HepG2 (cell line): ENCODE measurements at regions of chr5 and their contacts with region 1.

Region 1: DNA sequence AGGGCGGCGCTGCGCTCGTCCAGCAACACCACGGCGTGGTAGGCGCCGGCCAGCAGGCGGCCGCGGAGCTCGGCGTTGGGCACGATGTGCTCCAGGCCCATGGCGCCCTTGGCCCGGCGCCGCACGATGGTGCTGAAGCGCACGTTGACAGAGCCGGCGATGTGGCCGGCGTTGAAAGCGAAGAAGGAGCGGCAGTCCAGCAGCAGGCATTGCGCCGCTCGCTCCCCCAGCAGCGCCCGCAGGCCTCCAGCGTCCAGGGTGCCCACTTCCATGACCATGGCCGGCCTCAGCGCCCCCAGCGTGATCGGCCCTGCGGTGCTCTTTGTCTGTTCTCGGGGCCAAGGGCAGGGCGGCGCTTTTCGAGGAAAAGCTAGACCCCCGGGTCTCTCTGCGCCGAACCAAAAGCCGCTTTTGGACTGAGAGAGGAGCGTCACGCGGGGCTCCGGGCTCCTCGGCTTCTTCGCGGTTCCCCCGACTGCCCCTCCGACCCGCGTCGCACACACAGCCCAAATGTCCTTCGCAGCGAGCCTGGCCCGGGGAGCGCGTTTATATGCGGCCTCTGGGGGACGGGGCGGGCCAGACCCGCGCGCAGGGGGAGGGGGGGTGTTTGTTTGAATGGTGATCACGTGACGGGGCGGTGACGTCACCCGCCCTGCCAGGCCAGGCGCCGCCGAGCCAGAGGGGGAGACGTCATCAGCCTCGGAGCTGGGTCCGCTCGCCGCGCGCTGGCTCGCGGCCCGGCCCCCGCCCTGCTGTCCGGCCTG is at the start of gene DUSP1:
- DNase-seq: peak; percentile 88
- ATAC-seq: peak; percentile 64
- H3K4me3 ChIP-seq: peak within 1 kb of the TSS; percentile 90 to 94 (median 92)
- H3K27ac ChIP-seq: peak within 1 kb of the TSS; percentile 98
- H3K4me1 ChIP-seq: peaks cover 80% of the 10 kb centered on the region
- H3K27me3 ChIP-seq: no peaks in the 10 kb centered on the region; a peak in 1 of 5 replicates
- CTCF ChIP-seq: peak; percentile 64
- EP300 ChIP-seq: no peak
- POLR2A ChIP-seq: peak in 1 of 2 experiments; percentile 98; a peak in 2 of 4 replicates
- RAD21 ChIP-seq: peak; percentile 97
- total RNA-seq, gene DUSP1: 18.0 and 27.1 TPM in 2 replicates

Region 2: DNA sequence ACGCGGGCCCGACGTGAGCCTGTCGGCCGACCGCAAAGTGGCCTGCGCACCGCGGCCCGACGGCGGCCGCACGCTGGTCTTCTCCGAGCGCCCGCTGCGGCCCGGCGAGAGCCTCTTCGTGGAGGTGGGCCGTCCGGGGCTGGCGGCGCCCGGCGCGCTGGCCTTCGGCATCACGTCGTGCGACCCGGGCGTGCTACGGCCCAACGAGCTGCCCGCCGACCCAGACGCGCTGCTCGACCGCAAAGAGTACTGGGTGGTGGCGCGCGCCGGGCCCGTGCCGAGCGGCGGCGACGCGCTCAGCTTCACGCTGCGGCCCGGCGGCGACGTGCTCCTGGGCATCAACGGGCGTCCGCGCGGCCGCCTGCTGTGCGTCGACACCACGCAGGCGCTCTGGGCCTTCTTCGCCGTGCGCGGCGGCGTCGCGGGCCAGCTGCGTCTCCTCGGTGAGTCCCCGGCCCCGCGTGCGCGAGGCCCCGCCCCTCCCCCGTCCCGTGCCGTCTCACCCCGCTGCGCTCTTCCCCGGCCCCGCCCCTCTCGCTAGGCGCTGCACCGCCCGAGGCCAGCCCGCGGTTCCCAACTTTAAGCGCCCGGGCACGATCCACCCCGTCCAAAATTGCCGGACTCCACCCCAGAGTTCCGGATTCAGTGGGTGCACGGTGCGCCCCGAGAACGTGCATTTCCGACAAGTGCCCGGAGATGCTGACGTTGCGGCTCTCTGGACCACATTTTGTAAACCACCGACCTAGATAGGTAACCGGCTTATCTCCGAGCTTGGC is 87.0 kb before region 1 on chr5:
- CTCF ChIA-PET with region 1: no interaction called
- POLR2A ChIA-PET with region 1: no interaction called
- in situ Hi-C with region 1: no loop called
- intact Hi-C with region 1: no loop called
- DNase-seq: no peak
- ATAC-seq: no peak
- H3K4me3 ChIP-seq: no peak overlapping the region
- H3K27ac ChIP-seq: no peak overlapping the region
- H3K4me1 ChIP-seq: peaks cover 19% of the 10 kb centered on the region
- H3K27me3 ChIP-seq: peaks cover 0 to 9% of the 10 kb centered on the region in 2 experiments; a peak in 1 of 5 replicates
- CTCF ChIP-seq: no peak
- EP300 ChIP-seq: no peak
- POLR2A ChIP-seq: no peak
- RAD21 ChIP-seq: no peak

Region 3: DNA sequence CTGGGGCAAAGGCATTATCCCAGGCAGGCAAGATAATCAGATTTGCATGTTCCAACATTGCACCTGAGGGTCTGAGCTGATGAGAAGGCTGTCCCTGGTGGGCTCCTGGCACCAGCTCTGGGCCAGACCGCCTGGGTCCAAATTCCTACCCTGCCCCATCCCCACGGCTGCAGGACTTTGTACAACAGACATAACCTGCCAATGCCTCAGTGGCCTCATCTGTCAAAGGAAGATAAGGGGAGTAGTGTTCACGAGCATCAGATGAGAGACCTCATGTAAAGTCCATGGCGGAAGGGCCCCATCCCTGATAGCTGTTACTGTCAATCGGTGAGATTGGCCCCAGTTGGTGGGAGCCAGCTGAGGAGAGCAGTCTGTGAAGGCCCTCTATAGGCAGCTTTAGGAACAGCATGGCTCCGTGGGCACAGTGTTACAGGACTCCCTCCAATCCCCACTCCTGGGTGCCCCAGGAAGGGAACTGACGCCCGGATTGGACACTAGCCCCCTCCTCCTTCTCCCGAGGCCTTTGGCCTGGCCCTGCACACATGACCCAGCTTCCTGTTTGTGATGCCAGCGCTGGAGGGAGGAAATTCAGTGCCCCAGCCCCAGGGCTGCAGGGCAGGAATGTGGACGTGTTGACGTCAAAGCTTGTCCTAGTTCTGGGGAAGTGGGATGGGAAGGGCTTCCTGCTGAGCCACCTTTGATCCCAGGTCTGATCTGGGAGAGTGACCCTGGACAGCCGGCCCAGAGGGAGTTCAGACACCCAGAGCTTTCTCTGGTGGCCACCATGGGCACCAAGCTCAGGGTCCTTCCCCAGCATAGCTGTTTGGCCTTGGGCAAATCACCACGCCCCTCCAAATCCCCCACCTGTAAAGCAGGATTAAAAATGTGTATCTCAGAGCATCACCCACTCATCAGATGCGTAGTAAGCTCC is 56.1 kb before region 1 on chr5:
- CTCF ChIA-PET with region 1: interaction called, 6 read pairs
- POLR2A ChIA-PET with region 1: interaction called, 71 read pairs
- in situ Hi-C with region 1: no loop called
- intact Hi-C with region 1: loop called (anchors 2 kb)
- DNase-seq: peak; percentile 91
- ATAC-seq: peak; percentile 83
- H3K4me3 ChIP-seq: peak overlapping the region in 2 of 3 experiments; percentile 15 to 49; a peak in 4 of 6 replicates
- H3K27ac ChIP-seq: peak overlapping the region; percentile 66
- H3K4me1 ChIP-seq: peaks cover 51% of the 10 kb centered on the region
- H3K27me3 ChIP-seq: no peaks in the 10 kb centered on the region
- CTCF ChIP-seq: peak; percentile 84
- EP300 ChIP-seq: peak in 1 of 2 experiments; percentile 69; a peak in 1 of 4 replicates
- POLR2A ChIP-seq: peak in 1 of 2 experiments; percentile 67; a peak in 2 of 4 replicates
- RAD21 ChIP-seq: peak; percentile 61

Region 4: GRCh38 chr5:172733131-172733973 is 37.5 kb before region 1 on chr5:
- CTCF ChIA-PET with region 1: no interaction called
- POLR2A ChIA-PET with region 1: interaction called, 29 read pairs
- in situ Hi-C with region 1: loop called (anchors 5 kb)
- intact Hi-C with region 1: no loop called
- DNase-seq: peak; percentile 51
- ATAC-seq: peak; percentile 71
- H3K4me3 ChIP-seq: peak overlapping the region; percentile 36 to 57 (median 37); a peak in 5 of 6 replicates
- H3K27ac ChIP-seq: peak overlapping the region; percentile 17
- H3K4me1 ChIP-seq: peaks cover 88% of the 10 kb centered on the region
- H3K27me3 ChIP-seq: peaks cover 0 to 15% of the 10 kb centered on the region in 2 experiments; a peak in 3 of 5 replicates
- CTCF ChIP-seq: no peak
- EP300 ChIP-seq: no peak
- POLR2A ChIP-seq: 0 out of 4 replicates have a peak, but pooled peaks of 1 of the 2 experiments have one; percentile 21
- RAD21 ChIP-seq: no peak

Region 5: GRCh38 chr5:172795318-172795977 is 24.6 kb after region 1 on chr5:
- CTCF ChIA-PET with region 1: no interaction called
- POLR2A ChIA-PET with region 1: interaction called, 425 read pairs
- in situ Hi-C with region 1: no loop called
- intact Hi-C with region 1: no loop called
- DNase-seq: no peak
- ATAC-seq: no peak
- H3K4me3 ChIP-seq: no peak overlapping the region
- H3K27ac ChIP-seq: no peak overlapping the region
- H3K4me1 ChIP-seq: peaks cover 97% of the 10 kb centered on the region
- H3K27me3 ChIP-seq: no peaks in the 10 kb centered on the region
- CTCF ChIP-seq: no peak
- EP300 ChIP-seq: no peak
- POLR2A ChIP-seq: no peak
- RAD21 ChIP-seq: no peak

Region 6: GRCh38 chr5:172816901-172817564 is 46.2 kb after region 1 on chr5:
- CTCF ChIA-PET with region 1: no interaction called
- POLR2A ChIA-PET with region 1: interaction called, 10 read pairs
- in situ Hi-C with region 1: no loop called
- intact Hi-C with region 1: no loop called
- DNase-seq: no peak
- ATAC-seq: peak; percentile 72
- H3K4me3 ChIP-seq: peak overlapping the region in 1 of 3 experiments; percentile 29; a peak in 2 of 6 replicates
- H3K27ac ChIP-seq: no peak overlapping the region
- H3K4me1 ChIP-seq: peaks cover 44% of the 10 kb centered on the region
- H3K27me3 ChIP-seq: no peaks in the 10 kb centered on the region
- CTCF ChIP-seq: peak; percentile 37
- EP300 ChIP-seq: no peak
- POLR2A ChIP-seq: no peak
- RAD21 ChIP-seq: no peak

Region 7: GRCh38 chr5:172849606-172850453 is 79.0 kb after region 1 on chr5:
- CTCF ChIA-PET with region 1: no interaction called
- POLR2A ChIA-PET with region 1: interaction called, 28 read pairs
- in situ Hi-C with region 1: loop called (anchors 10 kb)
- intact Hi-C with region 1: no loop called
- DNase-seq: no peak
- ATAC-seq: no peak
- H3K4me3 ChIP-seq: no peak overlapping the region
- H3K27ac ChIP-seq: no peak overlapping the region
- H3K4me1 ChIP-seq: peaks cover 92% of the 10 kb centered on the region
- H3K27me3 ChIP-seq: no peaks in the 10 kb centered on the region
- CTCF ChIP-seq: no peak
- EP300 ChIP-seq: no peak
- POLR2A ChIP-seq: no peak
- RAD21 ChIP-seq: no peak

Region 8: GRCh38 chr5:172902497-172903200 is 131.8 kb after region 1 on chr5:
- CTCF ChIA-PET with region 1: interaction called, 7 read pairs
- POLR2A ChIA-PET with region 1: interaction called, 31 read pairs
- in situ Hi-C with region 1: loop called (anchors 5 kb)
- intact Hi-C with region 1: loop called (anchors 1 kb)
- DNase-seq: peak; percentile 90
- ATAC-seq: peak; percentile 84
- H3K4me3 ChIP-seq: no peak overlapping the region; a peak in 1 of 6 replicates
- H3K27ac ChIP-seq: peak overlapping the region; percentile 70
- H3K4me1 ChIP-seq: peaks cover 44% of the 10 kb centered on the region
- H3K27me3 ChIP-seq: no peaks in the 10 kb centered on the region
- CTCF ChIP-seq: peak; percentile 97
- EP300 ChIP-seq: peak in 1 of 2 experiments; percentile 78; a peak in 2 of 4 replicates
- POLR2A ChIP-seq: no peak
- RAD21 ChIP-seq: peak; percentile 80

Region 9: DNA sequence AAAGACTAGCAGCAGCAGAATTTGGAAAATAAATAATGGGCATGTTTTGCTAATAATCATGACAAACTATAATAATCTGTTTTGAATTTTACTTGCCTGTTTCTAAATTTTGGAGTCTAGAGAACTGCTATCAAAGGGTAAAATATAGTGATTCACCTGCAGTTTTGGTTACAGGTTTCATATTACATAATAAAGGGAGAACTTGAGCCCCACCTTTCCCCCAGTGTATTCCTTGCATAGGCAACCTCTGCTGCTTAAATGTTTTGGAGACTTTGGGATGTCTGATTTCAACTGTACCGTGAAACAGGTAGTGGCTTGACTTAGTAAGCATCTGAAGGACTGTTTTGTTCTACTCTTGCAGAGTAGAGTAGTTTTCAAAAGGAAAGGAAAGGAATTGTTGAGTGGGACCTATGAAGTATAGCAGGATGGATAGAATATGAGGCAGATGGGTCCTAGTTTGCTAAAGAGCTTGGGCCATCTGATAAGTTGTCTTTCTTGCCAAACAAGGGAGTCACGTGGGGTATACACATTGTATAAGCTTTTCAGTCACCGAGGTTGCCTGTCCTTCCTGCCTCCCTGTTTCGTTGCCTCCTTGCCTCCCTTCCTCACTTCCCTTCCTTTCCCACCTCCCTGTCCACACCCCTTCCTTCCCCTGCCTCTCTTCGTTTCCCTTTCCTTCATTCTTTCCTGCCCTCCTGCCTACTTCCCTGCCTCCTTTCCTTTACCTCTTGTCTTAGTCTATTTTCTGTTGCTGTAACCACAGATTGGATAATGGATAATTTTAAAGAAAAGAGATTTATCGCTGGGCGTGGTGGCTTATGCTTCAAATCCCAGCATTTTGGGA is 304.5 kb after region 1 on chr5:
- CTCF ChIA-PET with region 1: no interaction called
- POLR2A ChIA-PET with region 1: no interaction called
- in situ Hi-C with region 1: no loop called
- intact Hi-C with region 1: no loop called
- DNase-seq: no peak
- ATAC-seq: no peak
- H3K4me3 ChIP-seq: no peak overlapping the region
- H3K27ac ChIP-seq: no peak overlapping the region
- H3K4me1 ChIP-seq: peaks cover 17% of the 10 kb centered on the region
- H3K27me3 ChIP-seq: no peaks in the 10 kb centered on the region
- CTCF ChIP-seq: no peak
- EP300 ChIP-seq: no peak
- POLR2A ChIP-seq: no peak
- RAD21 ChIP-seq: no peak

Region 10: GRCh38 chr5:173707392-173707791 is 936.5 kb after region 1 on chr5:
- CTCF ChIA-PET with region 1: no interaction called
- POLR2A ChIA-PET with region 1: no interaction called
- in situ Hi-C with region 1: no loop called
- intact Hi-C with region 1: no loop called
- DNase-seq: no peak
- ATAC-seq: no peak
- H3K4me3 ChIP-seq: no peak overlapping the region
- H3K27ac ChIP-seq: no peak overlapping the region
- H3K4me1 ChIP-seq: peaks cover 32% of the 10 kb centered on the region
- H3K27me3 ChIP-seq: no peaks in the 10 kb centered on the region
- CTCF ChIP-seq: no peak
- EP300 ChIP-seq: no peak
- POLR2A ChIP-seq: no peak
- RAD21 ChIP-seq: no peak